SK-N-SH (cell line): ENCODE measurements at regions of chr3 and their contacts with region 1.

Region 1: DNA sequence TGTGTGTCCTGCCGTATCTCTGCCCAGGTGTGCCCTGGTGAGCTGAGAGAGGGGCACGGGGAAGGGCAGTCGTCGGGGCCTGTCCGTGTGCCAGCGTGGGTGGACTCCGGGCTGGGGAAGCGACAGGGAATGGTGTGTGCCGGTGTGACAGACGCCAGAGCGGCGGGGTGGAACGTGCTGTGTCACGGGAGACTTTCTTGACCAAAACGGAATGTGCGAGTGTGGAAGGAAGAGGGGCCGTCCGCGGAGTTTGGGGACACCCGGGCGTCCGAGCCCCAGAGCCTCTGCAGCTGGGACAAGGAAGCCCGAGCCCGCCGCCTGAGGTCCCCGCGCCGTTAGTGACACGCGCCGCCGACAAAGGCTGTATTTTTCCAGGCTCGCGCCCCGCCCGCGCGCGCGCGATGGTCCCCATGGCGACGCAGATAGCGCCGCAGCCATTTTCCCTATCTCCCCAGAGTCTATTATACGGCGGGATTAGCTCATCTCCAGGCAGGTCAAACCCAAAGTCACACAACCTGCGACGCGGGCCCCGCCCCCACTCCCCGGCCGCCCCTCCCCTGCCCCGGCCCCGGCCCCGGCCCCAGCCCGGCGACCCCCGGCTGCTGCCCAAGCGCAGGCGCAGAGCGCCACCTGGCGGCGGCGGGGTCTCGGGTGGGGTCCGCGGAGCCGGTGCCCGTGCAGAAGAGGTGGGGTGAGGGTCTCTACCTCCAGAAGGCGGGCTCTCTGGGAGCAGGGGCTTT is 4.6 kb upstream of the GATA2 start:
- DNase-seq: peak; percentile 95
- H3K4me3 ChIP-seq: peak overlapping the region; percentile 44 to 58
- H3K27ac ChIP-seq: peak overlapping the region in 1 of 2 experiments; percentile 97; a peak in 2 of 4 replicates
- H3K4me1 ChIP-seq: peaks cover 0 to 47% of the 10 kb centered on the region in 2 experiments; a peak in 1 of 4 replicates
- H3K27me3 ChIP-seq: peaks cover 3% of the 10 kb centered on the region; the same call in 1 of the 2 replicates
- CTCF ChIP-seq: peak; percentile 74
- EP300 ChIP-seq: peak in 1 of 2 experiments; percentile 8; a peak in 1 of 4 replicates
- RAD21 ChIP-seq: peak; percentile 64

Region 2: DNA sequence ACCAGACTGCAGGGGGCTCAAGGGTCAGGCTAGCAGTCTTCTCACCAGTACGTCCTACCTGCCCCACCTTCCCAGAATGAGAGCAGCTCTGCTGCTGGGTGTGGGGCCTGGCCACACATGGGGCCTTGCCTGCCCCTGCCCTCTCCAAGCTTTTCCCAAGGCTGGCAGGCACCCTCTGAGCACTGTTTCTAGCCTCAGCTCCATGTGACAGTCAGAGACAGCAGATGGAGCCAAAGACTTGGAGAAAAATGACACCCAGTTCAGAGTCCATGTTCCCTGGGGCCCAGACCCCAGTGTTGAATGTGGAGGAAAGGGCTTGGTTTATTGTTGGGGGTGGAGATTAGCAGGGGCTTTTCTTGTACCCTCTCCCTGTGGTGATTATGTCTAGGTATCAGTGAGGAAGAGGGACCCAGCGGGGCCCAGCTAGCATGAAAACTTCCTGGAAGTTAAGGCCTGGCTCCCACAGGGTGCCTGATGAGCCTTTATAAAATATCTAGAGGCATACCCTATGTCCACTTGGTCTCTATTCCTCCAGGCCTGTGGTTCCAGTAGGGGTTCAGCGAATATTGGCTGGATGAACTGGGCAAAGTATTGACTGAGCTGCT is 190.4 kb before region 1 on chr3:
- CTCF ChIA-PET with region 1: interaction called, 13 read pairs
- POLR2A ChIA-PET with region 1: interaction called, 5 read pairs
- DNase-seq: peak; percentile 58
- H3K4me3 ChIP-seq: no peak overlapping the region
- H3K27ac ChIP-seq: peak overlapping the region in 1 of 2 experiments; percentile 67; a peak in 2 of 4 replicates
- H3K4me1 ChIP-seq: peaks cover 0 to 26% of the 10 kb centered on the region in 2 experiments; a peak in 2 of 4 replicates
- H3K27me3 ChIP-seq: no peaks in the 10 kb centered on the region
- CTCF ChIP-seq: no peak; the same call in 1 of the 2 replicates
- EP300 ChIP-seq: no peak
- RAD21 ChIP-seq: peak; percentile 89

Region 3: DNA sequence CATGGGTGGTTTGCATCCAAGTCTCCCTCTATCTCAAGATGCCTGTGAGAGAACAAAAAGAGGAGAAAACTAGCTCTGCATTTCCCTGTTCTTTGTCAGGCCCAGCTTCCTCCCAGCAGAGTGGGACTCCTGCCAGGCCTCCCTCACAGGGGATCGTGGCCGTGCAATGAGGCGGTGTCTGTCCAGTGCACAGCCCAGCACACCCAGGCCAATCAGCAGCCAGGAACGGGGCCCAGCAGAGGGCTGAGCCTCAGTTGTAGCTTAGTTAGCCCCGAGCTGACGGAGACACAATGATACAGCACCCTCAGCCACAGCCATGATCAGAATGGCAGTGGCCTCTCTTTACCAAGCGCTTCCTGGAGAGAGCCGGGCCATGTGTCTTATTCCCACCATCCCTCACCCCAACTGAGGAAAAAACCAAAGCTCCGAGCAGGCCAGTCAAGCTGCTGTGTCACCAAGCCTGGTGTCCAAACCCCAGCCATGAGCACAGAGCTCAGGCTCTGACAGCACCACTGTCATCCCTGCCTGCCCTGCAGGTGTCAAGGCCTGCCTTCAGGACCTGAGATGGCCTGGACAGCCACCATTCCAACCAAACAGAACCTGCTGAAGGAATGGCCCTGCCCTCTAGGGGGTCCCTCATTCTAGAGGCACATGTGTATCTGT is 101.9 kb before region 1 on chr3:
- CTCF ChIA-PET with region 1: interaction called, 5 read pairs
- POLR2A ChIA-PET with region 1: interaction called, 11 read pairs
- DNase-seq: peak; percentile 72
- H3K4me3 ChIP-seq: no peak overlapping the region
- H3K27ac ChIP-seq: peak overlapping the region in 1 of 2 experiments; percentile 97; a peak in 2 of 4 replicates
- H3K4me1 ChIP-seq: peaks cover 3 to 95% of the 10 kb centered on the region in 2 experiments; a peak in 2 of 4 replicates
- H3K27me3 ChIP-seq: no peaks in the 10 kb centered on the region
- CTCF ChIP-seq: no peak
- EP300 ChIP-seq: no peak
- RAD21 ChIP-seq: 0 out of 2 replicates have a peak, but pooled peaks have one; percentile 11

Region 4: GRCh38 chr3:128464188-128464587 is 33.4 kb before region 1 on chr3:
- CTCF ChIA-PET with region 1: interaction called, 5 read pairs
- POLR2A ChIA-PET with region 1: interaction called, 21 read pairs
- DNase-seq: no peak
- H3K4me3 ChIP-seq: no peak overlapping the region
- H3K27ac ChIP-seq: no peak overlapping the region
- H3K4me1 ChIP-seq: peaks cover 0 to 58% of the 10 kb centered on the region in 2 experiments; a peak in 1 of 4 replicates
- H3K27me3 ChIP-seq: peaks cover 5% of the 10 kb centered on the region; the same call in 1 of the 2 replicates
- CTCF ChIP-seq: peak; percentile 16; the same call in 1 of the 2 replicates
- EP300 ChIP-seq: no peak
- RAD21 ChIP-seq: no peak; the same call in 1 of the 2 replicates

Region 5: DNA sequence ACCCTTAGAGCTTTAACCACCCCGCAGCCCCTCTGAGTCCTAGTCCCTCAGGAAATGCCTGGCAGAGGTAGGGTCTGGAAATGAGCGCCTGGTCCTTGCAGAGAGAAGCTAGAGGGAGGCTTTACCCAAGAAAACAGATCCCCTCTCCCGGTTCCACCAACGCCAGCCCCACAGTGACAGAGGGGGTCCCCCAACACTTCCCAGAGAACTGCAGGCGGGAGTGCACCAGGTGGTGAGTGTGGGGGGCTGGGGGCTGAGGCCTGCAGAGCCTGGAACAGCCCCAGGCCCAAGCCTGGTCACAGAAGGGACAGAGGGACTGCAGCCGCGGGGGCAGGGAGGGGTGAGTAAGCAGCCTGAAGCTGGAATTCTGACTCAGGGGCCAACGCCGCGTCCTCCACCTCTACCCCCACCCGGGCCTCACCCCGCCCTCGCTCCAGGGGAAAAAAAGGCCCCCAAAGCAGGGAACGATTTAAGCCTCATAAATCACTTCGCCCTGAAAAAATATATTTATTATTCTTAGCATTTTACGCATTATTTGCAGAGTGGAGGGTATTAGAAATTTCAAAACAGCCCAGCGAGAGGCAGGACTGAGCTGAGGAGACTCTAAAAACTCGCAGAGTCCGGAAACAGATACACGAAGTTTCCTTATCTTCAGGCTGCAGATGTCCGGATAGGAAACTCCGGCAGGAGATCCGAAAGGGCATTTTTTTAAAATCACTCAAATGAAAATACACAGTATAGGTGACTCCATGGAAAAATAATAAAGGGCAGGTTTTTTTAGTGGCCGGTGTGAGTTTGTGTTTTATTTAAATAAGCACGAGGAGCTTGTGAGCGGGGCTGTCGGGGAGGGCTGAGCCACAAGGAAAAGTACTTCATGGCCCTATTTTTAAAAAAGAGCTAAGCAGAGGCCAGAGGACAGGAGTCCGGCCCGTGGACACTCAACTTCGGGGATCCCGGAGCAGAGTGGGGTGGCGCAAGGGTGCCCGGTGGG is 14.6 kb before region 1 on chr3:
- CTCF ChIA-PET with region 1: interaction called, 13 read pairs
- POLR2A ChIA-PET with region 1: interaction called, 70 read pairs
- DNase-seq: peak; percentile 63
- H3K4me3 ChIP-seq: peak overlapping the region; percentile 12 to 75
- H3K27ac ChIP-seq: peak overlapping the region; percentile 51 to 97
- H3K4me1 ChIP-seq: peaks cover 8 to 43% of the 10 kb centered on the region in 2 experiments
- H3K27me3 ChIP-seq: no peaks in the 10 kb centered on the region
- CTCF ChIP-seq: peak; percentile 38
- EP300 ChIP-seq: peak in 1 of 2 experiments; percentile 35; a peak in 1 of 4 replicates
- RAD21 ChIP-seq: no peak

Region 6: GRCh38 chr3:128607710-128608048 is 110.1 kb after region 1 on chr3:
- CTCF ChIA-PET with region 1: interaction called, 11 read pairs
- POLR2A ChIA-PET with region 1: no interaction called
- DNase-seq: no peak
- H3K4me3 ChIP-seq: no peak overlapping the region
- H3K27ac ChIP-seq: no peak overlapping the region
- H3K4me1 ChIP-seq: peaks cover 0 to 22% of the 10 kb centered on the region in 2 experiments; a peak in 1 of 4 replicates
- H3K27me3 ChIP-seq: no peaks in the 10 kb centered on the region
- CTCF ChIP-seq: no peak
- EP300 ChIP-seq: no peak
- RAD21 ChIP-seq: no peak